ENCODE measurements at regions of chr4 and their contacts with region 1.

Region 1: DNA sequence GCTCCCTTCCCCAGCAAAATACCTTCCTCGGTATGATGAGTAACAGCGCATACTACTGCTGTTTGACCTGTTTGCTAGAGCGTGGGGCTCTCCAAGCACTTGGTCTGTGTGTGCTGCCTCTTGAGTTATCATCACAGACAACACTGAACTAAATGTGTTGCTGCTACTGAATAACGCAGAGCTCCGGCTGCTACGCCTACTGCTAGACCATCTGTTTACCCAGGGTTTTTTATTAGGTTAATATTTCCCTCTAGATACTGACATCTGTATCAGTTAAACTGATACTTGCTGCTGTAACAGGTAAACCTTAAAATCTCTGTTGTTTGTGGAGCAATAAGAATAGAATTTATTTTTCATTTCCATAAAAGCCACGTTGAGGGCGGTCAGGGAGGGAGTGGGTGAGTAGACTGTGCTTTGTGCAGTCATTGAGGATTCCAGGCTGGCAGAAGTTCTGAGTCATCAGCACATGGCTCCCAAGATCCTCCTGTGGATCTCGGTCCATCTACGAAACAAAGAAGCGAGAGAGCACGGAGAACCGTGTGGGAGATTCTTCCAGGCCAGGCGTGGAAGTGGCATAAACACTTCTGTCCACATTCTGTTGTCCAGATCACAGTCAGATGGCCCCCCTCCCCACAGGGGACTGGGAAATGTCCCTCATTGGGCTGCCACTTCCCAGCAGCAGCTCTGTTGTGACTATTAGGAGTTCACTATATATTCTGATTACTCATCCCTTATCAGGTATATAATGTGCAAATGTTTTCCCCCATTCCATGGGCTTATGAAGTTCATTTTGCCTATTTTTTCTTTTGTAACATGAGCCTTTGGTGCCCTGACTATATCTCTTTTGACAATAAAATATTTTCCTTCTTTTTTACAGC is 14.1 kb downstream of the GRK4 start:
- DNase-seq: no peak
- H3K4me3 ChIP-seq: no peak overlapping the region
- H3K4me3 Mint-ChIP-seq: no peak overlapping the region
- H3K27ac ChIP-seq: no peak overlapping the region
- H3K27ac Mint-ChIP-seq: no peak overlapping the region
- H3K4me1 ChIP-seq: peaks cover 5% of the 10 kb centered on the region
- H3K4me1 Mint-ChIP-seq: peaks cover 0 to 4% (median 0%) of the 10 kb centered on the region in 3 donors
- H3K27me3 ChIP-seq: no peaks in the 10 kb centered on the region
- H3K27me3 Mint-ChIP-seq: peaks cover 3 to 4% of the 10 kb centered on the region in 2 donors

Region 2: GRCh38 chr4:2963175-2963965 is 14.1 kb before region 1 on chr4 and contains the starts of genes GRK4 and NOP14:
- CTCF ChIA-PET with region 1: interaction called, 11 read pairs
- POLR2A ChIA-PET with region 1: interaction called, 4 read pairs
- DNase-seq: peak; percentile 96 to 99 (median 97)
- H3K4me3 ChIP-seq: peak within 1 kb of the TSS; percentile 70
- H3K4me3 Mint-ChIP-seq: peak within 1 kb of the TSS; percentile 84 to 95 (median 89)
- H3K27ac ChIP-seq: peak within 1 kb of the TSS; percentile 53
- H3K27ac Mint-ChIP-seq: peak within 1 kb of the TSS; percentile 65 to 96 (median 91)
- H3K4me1 ChIP-seq: peaks cover 27% of the 10 kb centered on the region
- H3K4me1 Mint-ChIP-seq: peaks cover 28 to 44% (median 38%) of the 10 kb centered on the region in 3 donors
- H3K27me3 ChIP-seq: no peaks in the 10 kb centered on the region
- H3K27me3 Mint-ChIP-seq: no peaks in the 10 kb centered on the region
- total RNA-seq, gene GRK4: 5.4 to 7.7 TPM
- total RNA-seq, gene NOP14: 156 to 165 TPM

Region 3: GRCh38 chr4:3037957-3038461 is 60.6 kb after region 1 on chr4:
- CTCF ChIA-PET with region 1: interaction called, 12 read pairs
- POLR2A ChIA-PET with region 1: no interaction called
- DNase-seq: no peak
- H3K4me3 ChIP-seq: peak overlapping the region; percentile 29
- H3K4me3 Mint-ChIP-seq: peak overlapping the region; percentile 4 to 71 (median 41)
- H3K27ac ChIP-seq: no peak overlapping the region
- H3K27ac Mint-ChIP-seq: peak overlapping the region in 1 of 8 donors; percentile 4
- H3K4me1 ChIP-seq: peaks cover 32% of the 10 kb centered on the region
- H3K4me1 Mint-ChIP-seq: peaks cover 24 to 46% (median 25%) of the 10 kb centered on the region in 3 donors
- H3K27me3 ChIP-seq: no peaks in the 10 kb centered on the region
- H3K27me3 Mint-ChIP-seq: peaks cover 9 to 10% of the 10 kb centered on the region in 2 donors